ENCODE measurements at regions of chr2 and their contacts with region 1.

Region 1: DNA sequence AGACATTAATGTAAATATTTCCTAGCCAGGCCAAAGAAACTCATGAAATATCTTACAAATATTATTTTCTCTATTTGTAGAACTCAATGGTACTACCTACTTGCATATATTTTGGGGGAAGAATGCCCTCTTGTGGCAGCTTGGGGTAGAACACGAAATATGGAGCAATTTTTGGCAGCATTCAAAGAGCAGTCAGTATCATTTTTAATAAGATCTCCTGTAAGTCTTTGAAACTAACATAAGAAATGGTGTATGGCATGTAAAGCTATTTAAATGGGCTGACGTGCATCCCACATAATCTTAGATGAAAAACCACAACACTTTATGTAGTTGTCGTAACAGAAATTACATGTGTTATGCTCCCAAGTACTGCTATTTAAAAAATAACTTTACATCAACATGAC is 62.3 kb upstream of the CCDC195 start:
- DNase-seq: peak; percentile 29 to 70 (median 55)
- ATAC-seq: peak; percentile 63
- H3K4me3 ChIP-seq: no peak overlapping the region
- H3K4me3 Mint-ChIP-seq: no peak overlapping the region
- H3K27ac ChIP-seq: no peak overlapping the region
- H3K27ac Mint-ChIP-seq: no peak overlapping the region
- H3K4me1 ChIP-seq: no peaks in the 10 kb centered on the region
- H3K4me1 Mint-ChIP-seq: peaks cover 5% of the 10 kb centered on the region
- H3K27me3 ChIP-seq: no peaks in the 10 kb centered on the region
- H3K27me3 Mint-ChIP-seq: no peaks in the 10 kb centered on the region
- CTCF ChIP-seq: peak; percentile 89

Region 2: GRCh38 chr2:223970343-223971128 is 807.9 kb before region 1 on chr2:
- CTCF ChIA-PET with region 1: no interaction called
- POLR2A ChIA-PET with region 1: no interaction called
- intact Hi-C with region 1: loop called (anchors 5 to 10 kb)
- DNase-seq: peak; percentile 16 to 75 (median 55)
- ATAC-seq: peak; percentile 72
- H3K4me3 ChIP-seq: no peak overlapping the region
- H3K4me3 Mint-ChIP-seq: no peak overlapping the region
- H3K27ac ChIP-seq: no peak overlapping the region
- H3K27ac Mint-ChIP-seq: no peak overlapping the region
- H3K4me1 ChIP-seq: no peaks in the 10 kb centered on the region
- H3K4me1 Mint-ChIP-seq: peaks cover 4% of the 10 kb centered on the region
- H3K27me3 ChIP-seq: no peaks in the 10 kb centered on the region
- H3K27me3 Mint-ChIP-seq: no peaks in the 10 kb centered on the region
- CTCF ChIP-seq: peak; percentile 96

Region 3: GRCh38 chr2:224861261-224861660 is 82.8 kb after region 1 on chr2:
- CTCF ChIA-PET with region 1: no interaction called
- POLR2A ChIA-PET with region 1: no interaction called
- intact Hi-C with region 1: no loop called
- DNase-seq: no peak
- ATAC-seq: no peak
- H3K4me3 ChIP-seq: no peak overlapping the region
- H3K4me3 Mint-ChIP-seq: no peak overlapping the region
- H3K27ac ChIP-seq: no peak overlapping the region
- H3K27ac Mint-ChIP-seq: peak overlapping the region; percentile 47
- H3K4me1 ChIP-seq: no peaks in the 10 kb centered on the region
- H3K4me1 Mint-ChIP-seq: peaks cover 2% of the 10 kb centered on the region
- H3K27me3 ChIP-seq: no peaks in the 10 kb centered on the region
- H3K27me3 Mint-ChIP-seq: no peaks in the 10 kb centered on the region
- CTCF ChIP-seq: no peak

Region 4: GRCh38 chr2:225042800-225043167 is 264.3 kb after region 1 on chr2:
- CTCF ChIA-PET with region 1: no interaction called
- POLR2A ChIA-PET with region 1: no interaction called
- intact Hi-C with region 1: no loop called
- DNase-seq: no peak
- ATAC-seq: no peak
- H3K4me3 ChIP-seq: peak overlapping the region; percentile 40 to 44
- H3K4me3 Mint-ChIP-seq: peak overlapping the region; percentile 86
- H3K27ac ChIP-seq: peak overlapping the region in 1 of 2 experiments; percentile 77
- H3K27ac Mint-ChIP-seq: peak overlapping the region; percentile 70
- H3K4me1 ChIP-seq: peaks cover 43% of the 10 kb centered on the region
- H3K4me1 Mint-ChIP-seq: peaks cover 50% of the 10 kb centered on the region
- H3K27me3 ChIP-seq: no peaks in the 10 kb centered on the region
- H3K27me3 Mint-ChIP-seq: no peaks in the 10 kb centered on the region
- CTCF ChIP-seq: no peak